Endothelial cell of umbilical vein (primary cell): ENCODE measurements at regions of chr19 and their contacts with region 1.

Region 1: GRCh38 chr19:860481-861101 is 1.1 kb downstream of the CFD start:
- DNase-seq: no peak
- H3K4me3 ChIP-seq: no peak overlapping the region
- H3K27ac ChIP-seq: no peak overlapping the region
- H3K4me1 ChIP-seq: no peaks in the 10 kb centered on the region
- H3K27me3 ChIP-seq: peaks cover 0 to 2% of the 10 kb centered on the region in 2 experiments
- CTCF ChIP-seq: no peak
- POLR2A ChIP-seq: no peak

Region 2: GRCh38 chr19:488505-489417 is 371.8 kb before region 1 on chr19:
- CTCF ChIA-PET with region 1: no interaction called
- POLR2A ChIA-PET with region 1: no interaction called
- dilution Hi-C with region 1: no loop called
- intact Hi-C with region 1: no loop called
- DNase-seq: peak; percentile 94
- H3K4me3 ChIP-seq: peak overlapping the region; percentile 53 to 77 (median 65)
- H3K27ac ChIP-seq: peak overlapping the region; percentile 92
- H3K4me1 ChIP-seq: peaks cover 7% of the 10 kb centered on the region
- H3K27me3 ChIP-seq: no peaks in the 10 kb centered on the region
- CTCF ChIP-seq: no peak
- POLR2A ChIP-seq: peak; percentile 87

Region 3: DNA sequence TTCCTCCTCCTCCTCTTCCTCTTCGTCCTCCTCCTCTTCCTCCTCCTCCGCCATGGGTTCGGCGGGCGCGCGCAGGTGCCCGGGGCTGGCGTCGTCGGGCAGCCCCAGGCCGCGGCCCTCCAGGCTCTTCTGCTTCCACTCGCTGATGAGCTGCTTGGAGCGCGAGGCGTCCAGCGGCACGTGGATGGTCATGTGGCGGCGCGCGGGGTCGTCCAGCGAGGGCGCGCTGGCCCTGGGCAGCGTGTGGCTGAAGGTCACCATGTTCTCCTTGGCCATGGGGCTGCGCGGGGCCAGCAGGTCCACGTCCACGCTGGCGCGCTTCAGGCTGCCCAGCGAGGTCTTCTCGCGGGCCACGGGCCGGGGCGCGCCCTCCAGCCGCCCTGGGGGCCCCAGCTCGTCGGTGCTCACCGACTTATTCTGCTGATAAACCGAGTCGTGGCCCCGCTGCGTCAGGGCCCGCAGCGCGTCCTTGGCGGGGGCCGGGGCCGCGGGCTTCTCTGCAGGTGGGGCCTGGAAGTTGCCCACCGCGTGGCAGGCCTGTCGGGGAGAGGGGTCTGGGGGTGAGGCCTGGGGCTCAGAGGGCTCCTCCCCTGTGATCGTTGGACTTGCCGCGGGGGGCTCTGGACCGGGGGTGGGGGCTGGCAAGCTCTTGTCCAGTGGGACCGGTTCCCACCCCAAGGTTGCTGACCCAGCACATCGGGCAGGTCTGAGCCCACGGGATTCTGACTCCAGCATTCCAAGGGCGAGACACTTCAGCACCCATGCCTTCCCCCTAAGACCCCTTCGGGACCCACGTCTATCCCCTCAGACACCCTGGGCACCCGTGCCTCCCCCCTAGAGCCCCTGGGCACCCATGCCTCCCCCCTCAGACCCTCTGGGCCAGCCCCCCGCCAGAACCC is 47.0 kb before region 1 on chr19:
- CTCF ChIA-PET with region 1: no interaction called
- POLR2A ChIA-PET with region 1: no interaction called
- dilution Hi-C with region 1: no loop called
- intact Hi-C with region 1: no loop called
- DNase-seq: no peak
- H3K4me3 ChIP-seq: no peak overlapping the region
- H3K27ac ChIP-seq: no peak overlapping the region
- H3K4me1 ChIP-seq: no peaks in the 10 kb centered on the region
- H3K27me3 ChIP-seq: no peaks in the 10 kb centered on the region
- CTCF ChIP-seq: no peak
- POLR2A ChIP-seq: no peak

Region 4: DNA sequence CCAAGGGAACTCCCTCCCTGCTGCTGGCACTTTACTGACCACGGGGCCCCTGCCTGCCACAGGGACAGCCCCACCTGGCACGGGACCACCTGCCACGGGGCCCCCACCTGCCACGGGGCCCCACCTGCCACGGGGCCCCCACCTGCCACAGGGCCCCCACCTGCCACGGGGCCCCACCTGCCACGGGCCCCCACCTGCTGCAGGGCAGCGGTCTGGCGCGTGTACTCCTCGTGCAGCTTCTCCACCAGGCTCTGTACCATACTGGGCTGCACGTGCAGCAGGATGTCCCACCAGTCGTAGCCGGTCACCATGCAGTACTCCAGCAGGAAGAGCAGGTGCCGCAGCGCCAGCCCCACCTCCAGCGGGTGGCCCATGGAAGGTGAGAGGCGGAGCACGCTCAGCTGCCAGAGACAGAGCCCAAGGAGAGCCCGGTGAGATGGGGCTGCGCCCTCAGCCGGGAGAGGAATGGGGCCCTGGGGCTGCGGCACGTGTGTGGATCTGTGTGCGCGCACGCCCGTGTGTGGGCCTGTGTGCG is 16.3 kb after region 1 on chr19:
- CTCF ChIA-PET with region 1: interaction called, 11 read pairs
- POLR2A ChIA-PET with region 1: no interaction called
- dilution Hi-C with region 1: no loop called
- intact Hi-C with region 1: no loop called
- DNase-seq: no peak
- H3K4me3 ChIP-seq: no peak overlapping the region
- H3K27ac ChIP-seq: no peak overlapping the region
- H3K4me1 ChIP-seq: no peaks in the 10 kb centered on the region
- H3K27me3 ChIP-seq: no peaks in the 10 kb centered on the region
- CTCF ChIP-seq: no peak
- POLR2A ChIP-seq: no peak

Region 5: DNA sequence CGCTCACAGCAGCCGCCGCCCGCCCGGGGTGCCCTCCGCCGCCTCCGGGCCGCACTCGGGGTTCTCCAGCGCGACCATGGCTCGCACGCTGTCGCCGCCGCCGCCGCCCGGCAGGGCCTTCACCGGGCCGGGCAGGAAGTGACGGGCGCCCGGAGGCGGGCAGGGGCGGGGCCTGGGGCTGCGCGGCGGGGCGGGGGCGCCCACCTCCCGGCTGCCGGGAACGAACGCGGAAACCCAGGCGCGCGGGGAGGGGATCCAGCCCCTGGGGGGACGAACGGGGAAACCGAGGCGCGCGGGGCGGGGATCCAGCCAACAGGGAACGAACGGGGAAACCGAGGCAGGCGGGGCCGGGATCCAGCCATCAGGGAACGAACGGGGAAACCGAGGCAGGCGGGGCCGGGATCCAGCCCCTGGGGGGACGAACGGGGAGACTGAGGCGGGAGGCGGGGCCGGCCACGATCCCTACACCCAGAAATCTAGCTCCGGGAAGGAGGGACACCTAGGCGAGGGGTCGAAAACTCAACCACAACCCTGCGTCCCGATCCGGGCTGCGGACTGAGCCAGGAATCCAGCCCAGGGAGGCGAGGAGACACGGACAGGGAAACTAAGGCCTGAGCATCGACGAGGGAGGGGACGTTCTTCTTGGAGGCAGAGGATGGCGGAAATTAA is 52.6 kb after region 1 on chr19 and contains the start of gene R3HDM4:
- CTCF ChIA-PET with region 1: interaction called, 5 read pairs
- POLR2A ChIA-PET with region 1: no interaction called
- dilution Hi-C with region 1: no loop called
- intact Hi-C with region 1: loop called (anchors 2 kb)
- DNase-seq: peak; percentile 38
- H3K4me3 ChIP-seq: peak within 1 kb of the TSS; percentile 59 to 98 (median 91)
- H3K27ac ChIP-seq: peak within 1 kb of the TSS; percentile 40
- H3K4me1 ChIP-seq: peaks cover 10% of the 10 kb centered on the region
- H3K27me3 ChIP-seq: peaks cover 9 to 13% of the 10 kb centered on the region in 2 experiments
- CTCF ChIP-seq: no peak
- POLR2A ChIP-seq: peak; percentile 47
- total RNA-seq, gene R3HDM4: 49.6 and 53.9 TPM in 2 replicates

Region 6: DNA sequence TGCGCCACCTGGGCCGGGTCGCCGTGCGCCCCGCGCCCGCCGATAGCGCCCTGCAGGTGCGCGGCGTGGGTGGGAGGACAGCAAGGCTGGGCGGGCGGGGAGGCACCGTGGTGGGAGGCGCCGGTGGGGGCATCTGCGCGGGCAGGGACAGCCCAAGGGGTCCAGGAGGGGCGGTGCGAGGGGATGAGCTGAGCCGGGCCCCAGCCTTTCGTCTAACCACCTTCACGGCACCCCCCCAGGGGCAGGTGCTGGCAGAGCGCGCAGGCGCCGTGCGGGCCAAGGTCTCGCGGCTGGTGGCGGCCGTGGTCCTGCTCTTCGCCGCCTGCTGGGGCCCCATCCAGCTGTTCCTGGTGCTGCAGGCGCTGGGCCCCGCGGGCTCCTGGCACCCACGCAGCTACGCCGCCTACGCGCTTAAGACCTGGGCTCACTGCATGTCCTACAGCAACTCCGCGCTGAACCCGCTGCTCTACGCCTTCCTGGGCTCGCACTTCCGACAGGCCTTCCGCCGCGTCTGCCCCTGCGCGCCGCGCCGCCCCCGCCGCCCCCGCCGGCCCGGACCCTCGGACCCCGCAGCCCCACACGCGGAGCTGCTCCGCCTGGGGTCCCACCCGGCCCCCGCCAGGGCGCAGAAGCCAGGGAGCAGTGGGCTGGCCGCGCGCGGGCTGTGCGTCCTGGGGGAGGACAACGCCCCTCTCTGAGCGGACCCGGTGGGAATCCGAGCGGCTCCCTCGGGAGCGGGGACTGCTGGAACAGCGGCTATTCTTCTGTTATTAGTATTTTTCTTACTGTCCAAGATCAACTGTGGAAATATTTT is 59.7 kb after region 1 on chr19:
- CTCF ChIA-PET with region 1: interaction called, 10 read pairs
- POLR2A ChIA-PET with region 1: no interaction called
- dilution Hi-C with region 1: no loop called
- intact Hi-C with region 1: loop called (anchors 1 kb)
- DNase-seq: no peak
- H3K4me3 ChIP-seq: no peak overlapping the region
- H3K27ac ChIP-seq: no peak overlapping the region
- H3K4me1 ChIP-seq: peaks cover 6% of the 10 kb centered on the region
- H3K27me3 ChIP-seq: peaks cover 28 to 35% of the 10 kb centered on the region in 2 experiments
- CTCF ChIP-seq: no peak
- POLR2A ChIP-seq: no peak

Region 7: DNA sequence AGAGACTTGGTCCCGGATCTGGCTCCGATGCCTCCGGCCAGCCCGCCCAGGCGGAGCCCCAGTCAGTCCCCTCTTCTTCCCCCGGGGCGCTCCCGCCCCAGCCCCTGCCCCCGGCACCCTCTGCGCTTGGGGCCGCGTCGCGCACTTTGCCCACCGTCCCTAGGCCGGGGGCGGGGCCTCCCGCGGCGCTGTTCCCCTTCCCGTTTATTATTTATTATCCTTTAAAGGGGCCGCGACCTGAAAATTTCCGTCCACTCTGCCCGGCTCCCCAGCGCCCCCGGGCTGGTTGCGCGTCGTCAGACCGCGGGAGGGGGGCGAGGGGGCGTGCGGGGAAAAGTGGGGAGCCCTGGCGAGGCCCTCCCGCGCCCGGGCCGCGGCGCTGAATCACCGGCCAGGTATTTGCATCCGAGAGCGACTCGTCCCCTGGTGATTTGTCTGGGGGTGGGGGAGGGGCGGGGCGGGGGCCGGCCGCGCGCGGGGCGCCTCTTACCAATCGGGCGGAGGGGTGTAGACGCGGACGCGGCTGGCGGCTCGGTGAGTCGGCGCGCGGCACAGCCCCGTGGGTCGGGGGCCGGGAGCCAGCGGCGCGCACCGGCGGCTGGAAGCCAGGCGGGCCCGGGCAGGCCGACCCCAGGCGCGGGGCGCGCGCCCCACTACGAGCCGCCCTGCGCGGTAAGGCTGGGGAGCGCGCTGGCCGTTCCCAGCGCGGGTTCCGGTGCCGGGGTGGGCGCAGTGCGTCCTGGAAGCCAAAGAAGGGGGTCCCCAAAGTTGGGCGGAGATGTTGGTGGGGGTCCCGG is 65.1 kb after region 1 on chr19 and contains the start of gene ARID3A:
- CTCF ChIA-PET with region 1: interaction called, 10 read pairs
- POLR2A ChIA-PET with region 1: no interaction called
- dilution Hi-C with region 1: no loop called
- intact Hi-C with region 1: loop called (anchors 1 kb)
- DNase-seq: peak; percentile 79
- H3K4me3 ChIP-seq: peak within 1 kb of the TSS; percentile 69 to 95 (median 85)
- H3K27ac ChIP-seq: peak within 1 kb of the TSS; percentile 86
- H3K4me1 ChIP-seq: peaks cover 6% of the 10 kb centered on the region
- H3K27me3 ChIP-seq: peaks cover 1% of the 10 kb centered on the region in 2 experiments
- CTCF ChIP-seq: no peak
- POLR2A ChIP-seq: no peak
- total RNA-seq, gene ARID3A: 10.8 and 13.2 TPM in 2 replicates

Region 8: GRCh38 chr19:984165-984967 is 123.8 kb after region 1 on chr19 and contains the start of gene WDR18:
- CTCF ChIA-PET with region 1: interaction called, 16 read pairs
- POLR2A ChIA-PET with region 1: interaction called, 6 read pairs
- dilution Hi-C with region 1: no loop called
- intact Hi-C with region 1: loop called (anchors 1 kb)
- DNase-seq: peak; percentile 85
- H3K4me3 ChIP-seq: peak within 1 kb of the TSS; percentile 79 to 95 (median 83)
- H3K27ac ChIP-seq: peak within 1 kb of the TSS; percentile 79
- H3K4me1 ChIP-seq: peaks cover 11% of the 10 kb centered on the region
- H3K27me3 ChIP-seq: no peaks in the 10 kb centered on the region
- CTCF ChIP-seq: peak in 1 of 2 donors; percentile 19
- POLR2A ChIP-seq: peak; percentile 67
- total RNA-seq, gene WDR18: 54.8 and 74.7 TPM in 2 replicates